ENCODE measurements at regions of chr19 and their contacts with region 1.

Region 1: GRCh38 chr19:16382775-16383543 is 58.3 kb downstream of the KLF2 start:
- DNase-seq: peak; percentile 60 to 67
- H3K4me3 ChIP-seq: no peak overlapping the region
- H3K27ac ChIP-seq: no peak overlapping the region
- H3K4me1 ChIP-seq: no peaks in the 10 kb centered on the region
- H3K27me3 ChIP-seq: no peaks in the 10 kb centered on the region
- CTCF ChIP-seq: peak; percentile 86

Region 2: GRCh38 chr19:16337809-16338469 is 45.0 kb before region 1 on chr19:
- CTCF ChIA-PET with region 1: interaction called, 14 read pairs
- POLR2A ChIA-PET with region 1: no interaction called
- intact Hi-C with region 1: no loop called
- DNase-seq: no peak
- H3K4me3 ChIP-seq: no peak overlapping the region
- H3K27ac ChIP-seq: peak overlapping the region; percentile 80
- H3K4me1 ChIP-seq: peaks cover 31% of the 10 kb centered on the region
- H3K27me3 ChIP-seq: no peaks in the 10 kb centered on the region
- CTCF ChIP-seq: no peak

Measured in PC-9 (cell line).